SK-N-SH (cell line): ENCODE measurements at regions of chr10 and their contacts with region 1.

Region 1: GRCh38 chr10:23158370-23158769 is 33.7 kb upstream of the PTF1A start:
- DNase-seq: peak; percentile 85
- H3K4me3 ChIP-seq: peak overlapping the region; percentile 25 to 49; a peak in 3 of 4 replicates
- H3K27ac ChIP-seq: no peak overlapping the region
- H3K4me1 ChIP-seq: peaks cover 0 to 3% of the 10 kb centered on the region in 2 experiments; a peak in 1 of 4 replicates
- H3K27me3 ChIP-seq: peaks cover 7% of the 10 kb centered on the region; the same call in 1 of the 2 replicates
- CTCF ChIP-seq: peak; percentile 94
- EP300 ChIP-seq: no peak
- RAD21 ChIP-seq: peak; percentile 91

Region 2: DNA sequence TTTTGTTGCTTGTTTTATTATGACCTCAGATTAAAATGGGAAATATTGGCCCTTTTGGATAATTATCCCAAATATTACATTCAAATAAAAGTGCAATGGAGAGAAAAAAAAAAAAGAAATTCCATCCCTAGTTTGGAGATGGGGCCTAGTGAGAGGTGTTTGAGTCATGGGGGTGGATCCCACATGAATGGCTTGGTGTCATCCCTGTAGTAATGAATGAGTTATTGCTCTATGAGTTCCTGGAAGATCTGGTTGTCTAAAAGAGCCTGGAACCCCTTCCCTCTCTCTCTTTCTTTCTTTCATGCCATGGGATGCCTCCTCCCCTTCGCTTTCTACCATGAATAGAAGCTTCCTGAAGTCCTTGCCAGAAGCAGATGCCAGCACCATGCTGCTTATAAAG is 18.7 kb before region 1 on chr10:
- CTCF ChIA-PET with region 1: interaction called, 51 read pairs
- POLR2A ChIA-PET with region 1: no interaction called
- DNase-seq: no peak
- H3K4me3 ChIP-seq: no peak overlapping the region
- H3K27ac ChIP-seq: no peak overlapping the region
- H3K4me1 ChIP-seq: no peaks in the 10 kb centered on the region
- H3K27me3 ChIP-seq: no peaks in the 10 kb centered on the region
- CTCF ChIP-seq: no peak
- EP300 ChIP-seq: no peak
- RAD21 ChIP-seq: no peak

Region 3: GRCh38 chr10:23192737-23193434 is 34.5 kb after region 1 on chr10:
- CTCF ChIA-PET with region 1: interaction called, 11 read pairs
- POLR2A ChIA-PET with region 1: no interaction called
- DNase-seq: peak; percentile 73
- H3K4me3 ChIP-seq: no peak overlapping the region
- H3K27ac ChIP-seq: no peak overlapping the region
- H3K4me1 ChIP-seq: no peaks in the 10 kb centered on the region; a peak in 1 of 4 replicates
- H3K27me3 ChIP-seq: peaks cover 40% of the 10 kb centered on the region
- CTCF ChIP-seq: no peak
- EP300 ChIP-seq: no peak
- RAD21 ChIP-seq: no peak

Region 4: GRCh38 chr10:23280420-23281043 is 122.2 kb after region 1 on chr10:
- CTCF ChIA-PET with region 1: interaction called, 14 read pairs
- POLR2A ChIA-PET with region 1: no interaction called
- DNase-seq: no peak
- H3K4me3 ChIP-seq: no peak overlapping the region
- H3K27ac ChIP-seq: no peak overlapping the region
- H3K4me1 ChIP-seq: no peaks in the 10 kb centered on the region
- H3K27me3 ChIP-seq: no peaks in the 10 kb centered on the region
- CTCF ChIP-seq: no peak
- EP300 ChIP-seq: no peak
- RAD21 ChIP-seq: no peak

Region 5: DNA sequence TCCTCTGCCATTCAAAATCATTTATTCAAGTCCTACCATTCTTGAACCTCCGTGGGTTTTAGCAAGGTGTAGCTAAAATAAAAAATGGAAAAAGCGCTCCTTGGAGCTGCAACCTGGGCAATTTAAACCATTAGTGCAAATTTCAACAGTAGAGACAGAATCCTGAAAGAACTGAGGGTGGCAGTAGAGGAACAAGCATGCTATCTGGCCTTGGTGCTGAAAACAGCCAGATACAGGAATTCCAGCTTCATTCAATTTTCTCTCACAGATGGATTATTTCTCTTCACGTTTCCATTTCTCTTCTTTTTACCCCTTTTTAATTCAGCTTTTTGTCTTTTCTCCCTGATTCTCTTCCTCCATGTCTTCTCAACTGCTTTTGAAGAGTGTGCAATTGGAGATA is 358.2 kb after region 1 on chr10:
- CTCF ChIA-PET with region 1: interaction called, 10 read pairs
- POLR2A ChIA-PET with region 1: no interaction called
- DNase-seq: peak; percentile 28
- H3K4me3 ChIP-seq: no peak overlapping the region
- H3K27ac ChIP-seq: no peak overlapping the region
- H3K4me1 ChIP-seq: 0 out of 4 replicates have a peak, but pooled peaks cover 0 to 6% of the 10 kb centered on the region in 2 experiments
- H3K27me3 ChIP-seq: no peaks in the 10 kb centered on the region
- CTCF ChIP-seq: peak; percentile 71
- EP300 ChIP-seq: no peak
- RAD21 ChIP-seq: peak; percentile 71

Region 6: DNA sequence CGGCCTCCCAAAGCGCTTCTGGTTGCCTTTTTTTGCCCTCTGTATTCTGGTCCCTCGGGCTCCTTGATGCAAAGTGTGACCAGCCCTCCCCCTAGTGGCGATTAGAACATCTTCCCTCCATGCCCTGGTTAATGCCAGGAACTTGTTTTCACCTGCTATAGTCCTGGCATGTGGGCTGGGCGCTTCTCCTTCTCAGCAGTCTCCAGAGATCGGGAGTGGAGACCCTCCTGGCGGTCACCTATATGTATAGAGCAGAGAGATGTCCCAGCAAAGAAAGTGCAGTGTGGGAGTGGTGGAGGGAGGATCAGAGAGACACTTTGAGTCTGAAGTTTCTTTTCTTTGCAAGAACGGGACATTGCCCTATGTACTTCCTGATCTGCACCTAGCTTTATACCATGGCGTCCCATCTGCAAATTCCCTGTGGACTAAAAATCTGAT is 544.6 kb after region 1 on chr10:
- CTCF ChIA-PET with region 1: interaction called, 12 read pairs
- POLR2A ChIA-PET with region 1: no interaction called
- DNase-seq: peak; percentile 65
- H3K4me3 ChIP-seq: no peak overlapping the region; a peak in 1 of 4 replicates
- H3K27ac ChIP-seq: no peak overlapping the region
- H3K4me1 ChIP-seq: no peaks in the 10 kb centered on the region
- H3K27me3 ChIP-seq: no peaks in the 10 kb centered on the region
- CTCF ChIP-seq: peak; percentile 81
- EP300 ChIP-seq: no peak
- RAD21 ChIP-seq: peak; percentile 74